HCT116 (cell line): ENCODE measurements at regions of chr12 and their contacts with region 1.

Region 1: DNA sequence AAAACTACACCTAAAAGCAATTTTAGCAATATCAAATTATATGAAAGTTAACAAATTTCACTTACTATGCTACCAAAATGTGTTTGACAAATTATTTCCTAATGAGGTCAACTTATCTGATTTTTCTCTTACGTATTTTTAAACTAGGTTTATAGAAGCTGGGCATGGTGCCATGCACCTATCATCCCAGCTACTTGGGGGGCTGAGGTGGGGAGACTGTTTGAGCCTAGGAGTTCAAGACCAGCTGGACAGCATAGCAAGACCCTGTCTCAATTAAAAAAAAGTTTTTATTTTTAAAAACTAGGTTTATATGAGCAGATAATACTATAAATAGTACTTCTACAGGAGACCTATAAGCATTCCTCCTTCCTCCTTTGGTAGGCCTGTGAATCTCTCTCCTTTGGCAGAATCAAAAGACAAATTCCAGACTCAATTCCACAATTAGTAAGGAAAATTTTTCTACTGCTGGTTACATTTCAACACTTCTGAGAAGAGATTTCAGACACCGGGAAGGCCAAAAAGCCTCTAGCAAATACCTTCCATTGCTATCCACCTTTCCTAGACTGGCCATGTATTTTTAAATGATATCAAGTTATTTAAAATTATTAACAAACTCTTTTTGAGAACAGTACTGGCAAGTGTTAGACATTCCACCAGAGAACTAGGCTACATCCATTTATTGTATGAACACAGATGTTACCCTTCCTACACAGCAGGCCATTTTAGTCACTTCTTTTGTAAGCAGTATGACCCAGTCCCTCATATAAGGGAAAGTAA is 34.4 kb downstream of the CDK17 start:
- DNase-seq: no peak
- ATAC-seq: no peak
- H3K4me3 ChIP-seq: no peak overlapping the region
- H3K27ac ChIP-seq: no peak overlapping the region
- H3K4me1 ChIP-seq: peaks cover 3 to 17% of the 10 kb centered on the region in 2 experiments; a peak in 3 of 4 replicates
- H3K27me3 ChIP-seq: no peaks in the 10 kb centered on the region
- CTCF ChIP-seq: no peak
- POLR2A ChIP-seq: no peak
- RAD21 ChIP-seq: no peak

Region 2: DNA sequence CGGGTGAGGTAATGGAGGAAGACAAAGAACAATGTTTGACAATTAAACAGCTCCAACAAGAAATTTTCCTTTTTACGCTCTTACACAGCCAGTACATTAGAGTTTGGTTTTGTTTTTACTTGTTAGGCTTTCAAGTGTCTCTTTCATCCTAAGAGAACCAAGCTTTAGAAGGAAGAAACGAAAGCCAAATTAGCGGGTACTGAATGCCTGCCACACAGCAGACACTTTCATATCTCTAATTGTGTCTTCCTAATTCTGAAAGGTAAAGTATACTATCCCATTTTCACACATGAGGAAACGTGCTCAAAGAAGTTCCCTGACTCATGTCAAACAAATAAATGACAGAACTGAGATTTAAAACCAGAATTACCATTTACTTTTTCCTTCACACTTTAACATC is 30.5 kb before region 1 on chr12:
- CTCF ChIA-PET with region 1: no interaction called
- POLR2A ChIA-PET with region 1: no interaction called
- RAD21 ChIA-PET with region 1: no interaction called
- intact Hi-C with region 1: no loop called
- DNase-seq: no peak
- ATAC-seq: no peak
- H3K4me3 ChIP-seq: no peak overlapping the region
- H3K27ac ChIP-seq: no peak overlapping the region
- H3K4me1 ChIP-seq: no peaks in the 10 kb centered on the region
- H3K27me3 ChIP-seq: no peaks in the 10 kb centered on the region
- CTCF ChIP-seq: no peak
- POLR2A ChIP-seq: no peak
- RAD21 ChIP-seq: no peak

Region 3: DNA sequence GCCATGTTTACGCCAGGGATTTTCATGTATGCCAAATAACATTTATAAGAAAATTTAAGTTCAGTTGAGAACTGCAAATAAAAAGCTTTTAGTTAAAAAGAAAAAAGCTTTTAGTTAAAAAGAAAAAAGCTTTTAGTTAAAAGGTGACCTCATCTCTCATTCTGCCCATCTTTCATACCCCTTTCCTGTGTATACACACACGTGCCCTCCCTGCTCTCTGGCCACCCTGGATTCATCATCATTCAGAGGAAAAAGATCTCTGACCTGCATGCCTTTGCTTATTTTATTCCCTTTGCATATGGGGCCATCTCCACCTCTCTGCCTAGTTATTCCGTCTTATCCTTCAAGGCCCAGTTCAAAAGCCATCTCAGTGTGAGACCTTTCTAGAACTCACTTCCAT is 72.5 kb after region 1 on chr12:
- CTCF ChIA-PET with region 1: no interaction called
- POLR2A ChIA-PET with region 1: no interaction called
- RAD21 ChIA-PET with region 1: no interaction called
- intact Hi-C with region 1: loop called (anchors 2 kb)
- DNase-seq: no peak
- ATAC-seq: no peak
- H3K4me3 ChIP-seq: no peak overlapping the region
- H3K27ac ChIP-seq: no peak overlapping the region
- H3K4me1 ChIP-seq: no peaks in the 10 kb centered on the region
- H3K27me3 ChIP-seq: no peaks in the 10 kb centered on the region
- CTCF ChIP-seq: no peak
- POLR2A ChIP-seq: no peak
- RAD21 ChIP-seq: no peak